HepG2 (cell line): ENCODE measurements at regions of chr4 and their contacts with region 1.

Region 1: GRCh38 chr4:124483115-124483898 is 229.2 kb downstream of the ANKRD50 start:
- DNase-seq: no peak
- ATAC-seq: no peak
- H3K4me3 ChIP-seq: no peak overlapping the region
- H3K27ac ChIP-seq: no peak overlapping the region
- H3K4me1 ChIP-seq: no peaks in the 10 kb centered on the region; the same call in 1 of the 2 replicates
- H3K27me3 ChIP-seq: no peaks in the 10 kb centered on the region
- CTCF ChIP-seq: no peak
- EP300 ChIP-seq: no peak
- POLR2A ChIP-seq: no peak
- RAD21 ChIP-seq: no peak

Region 2: GRCh38 chr4:124234771-124235170 is 248.5 kb before region 1 on chr4:
- CTCF ChIA-PET with region 1: no interaction called
- POLR2A ChIA-PET with region 1: no interaction called
- in situ Hi-C with region 1: no loop called
- intact Hi-C with region 1: no loop called
- DNase-seq: no peak
- ATAC-seq: no peak
- H3K4me3 ChIP-seq: no peak overlapping the region
- H3K27ac ChIP-seq: no peak overlapping the region
- H3K4me1 ChIP-seq: no peaks in the 10 kb centered on the region
- H3K27me3 ChIP-seq: no peaks in the 10 kb centered on the region
- CTCF ChIP-seq: no peak
- EP300 ChIP-seq: no peak
- POLR2A ChIP-seq: no peak
- RAD21 ChIP-seq: no peak

Region 3: DNA sequence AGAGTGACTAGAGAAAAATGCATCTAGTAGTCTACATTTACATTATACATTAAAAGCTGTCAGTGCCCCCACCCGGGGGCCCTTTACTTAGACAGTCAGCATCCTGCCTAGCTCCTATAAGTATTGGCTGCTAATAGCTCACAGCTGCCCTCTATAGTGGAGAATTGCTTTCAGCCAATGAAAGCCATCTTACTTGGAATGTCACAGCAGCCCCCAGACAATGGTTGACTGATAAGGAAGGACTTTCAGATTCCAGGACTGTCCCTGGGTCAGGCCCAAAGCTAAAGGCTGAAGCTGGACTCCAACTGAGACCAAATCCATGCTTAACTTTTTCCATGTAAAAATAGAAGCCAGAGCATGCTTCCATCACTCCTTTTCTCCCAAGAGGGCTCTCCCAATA is 32.3 kb after region 1 on chr4:
- CTCF ChIA-PET with region 1: no interaction called
- POLR2A ChIA-PET with region 1: no interaction called
- in situ Hi-C with region 1: no loop called
- intact Hi-C with region 1: no loop called
- DNase-seq: no peak
- ATAC-seq: peak; percentile 53
- H3K4me3 ChIP-seq: no peak overlapping the region
- H3K27ac ChIP-seq: no peak overlapping the region
- H3K4me1 ChIP-seq: no peaks in the 10 kb centered on the region
- H3K27me3 ChIP-seq: no peaks in the 10 kb centered on the region
- CTCF ChIP-seq: no peak
- EP300 ChIP-seq: no peak
- POLR2A ChIP-seq: no peak
- RAD21 ChIP-seq: no peak

Region 4: GRCh38 chr4:124573076-124573475 is 89.8 kb after region 1 on chr4:
- CTCF ChIA-PET with region 1: no interaction called
- POLR2A ChIA-PET with region 1: no interaction called
- in situ Hi-C with region 1: no loop called
- intact Hi-C with region 1: loop called (anchors 10 kb)
- DNase-seq: no peak
- ATAC-seq: no peak
- H3K4me3 ChIP-seq: no peak overlapping the region
- H3K27ac ChIP-seq: no peak overlapping the region
- H3K4me1 ChIP-seq: no peaks in the 10 kb centered on the region
- H3K27me3 ChIP-seq: no peaks in the 10 kb centered on the region
- CTCF ChIP-seq: no peak
- EP300 ChIP-seq: no peak
- POLR2A ChIP-seq: no peak
- RAD21 ChIP-seq: no peak

Region 5: DNA sequence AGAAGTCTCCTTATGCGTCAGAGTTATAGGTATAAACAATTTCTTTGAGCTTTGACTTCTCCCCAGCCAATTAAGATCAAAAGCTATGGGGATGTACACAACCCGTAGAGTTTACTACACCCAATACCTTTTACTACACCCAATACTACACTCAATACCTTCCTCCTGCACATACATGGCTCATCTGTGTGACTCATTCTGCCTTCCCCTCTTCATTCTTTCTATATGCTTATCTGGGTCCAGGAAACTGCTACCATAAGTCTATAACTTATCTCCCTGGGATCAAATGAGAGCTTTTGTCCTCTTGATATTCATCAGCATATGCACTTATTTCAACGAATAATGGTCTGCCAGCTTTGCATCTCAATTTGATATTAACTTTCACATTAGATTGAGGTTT is 201.0 kb after region 1 on chr4:
- CTCF ChIA-PET with region 1: no interaction called
- POLR2A ChIA-PET with region 1: no interaction called
- in situ Hi-C with region 1: no loop called
- intact Hi-C with region 1: loop called (anchors 10 kb)
- DNase-seq: no peak
- ATAC-seq: no peak
- H3K4me3 ChIP-seq: no peak overlapping the region
- H3K27ac ChIP-seq: no peak overlapping the region
- H3K4me1 ChIP-seq: no peaks in the 10 kb centered on the region
- H3K27me3 ChIP-seq: no peaks in the 10 kb centered on the region
- CTCF ChIP-seq: no peak
- EP300 ChIP-seq: no peak
- POLR2A ChIP-seq: no peak
- RAD21 ChIP-seq: no peak